ENCODE measurements at regions of chr2 and their contacts with region 1.

Region 1: GRCh38 chr2:197675711-197676188 is 363 bp upstream of the RFTN2 start:
- DNase-seq: peak; percentile 80
- H3K4me3 ChIP-seq: peak overlapping the region; percentile 49
- H3K27ac ChIP-seq: peak overlapping the region; percentile 75
- H3K4me1 ChIP-seq: no peaks in the 10 kb centered on the region
- H3K27me3 ChIP-seq: no peaks in the 10 kb centered on the region
- CTCF ChIP-seq: no peak

Region 2: GRCh38 chr2:196944584-196944983 is 731.2 kb before region 1 on chr2:
- CTCF ChIA-PET with region 1: no interaction called
- POLR2A ChIA-PET with region 1: interaction called, 14 read pairs
- intact Hi-C with region 1: no loop called
- DNase-seq: no peak
- H3K4me3 ChIP-seq: no peak overlapping the region
- H3K27ac ChIP-seq: no peak overlapping the region
- H3K4me1 ChIP-seq: no peaks in the 10 kb centered on the region
- H3K27me3 ChIP-seq: no peaks in the 10 kb centered on the region
- CTCF ChIP-seq: no peak

Measured in A673 (cell line).